Esophagus muscularis mucosa (tissue), 4 donors: ENCODE measurements at regions of chr1 and their contacts with region 1.

Region 1: DNA sequence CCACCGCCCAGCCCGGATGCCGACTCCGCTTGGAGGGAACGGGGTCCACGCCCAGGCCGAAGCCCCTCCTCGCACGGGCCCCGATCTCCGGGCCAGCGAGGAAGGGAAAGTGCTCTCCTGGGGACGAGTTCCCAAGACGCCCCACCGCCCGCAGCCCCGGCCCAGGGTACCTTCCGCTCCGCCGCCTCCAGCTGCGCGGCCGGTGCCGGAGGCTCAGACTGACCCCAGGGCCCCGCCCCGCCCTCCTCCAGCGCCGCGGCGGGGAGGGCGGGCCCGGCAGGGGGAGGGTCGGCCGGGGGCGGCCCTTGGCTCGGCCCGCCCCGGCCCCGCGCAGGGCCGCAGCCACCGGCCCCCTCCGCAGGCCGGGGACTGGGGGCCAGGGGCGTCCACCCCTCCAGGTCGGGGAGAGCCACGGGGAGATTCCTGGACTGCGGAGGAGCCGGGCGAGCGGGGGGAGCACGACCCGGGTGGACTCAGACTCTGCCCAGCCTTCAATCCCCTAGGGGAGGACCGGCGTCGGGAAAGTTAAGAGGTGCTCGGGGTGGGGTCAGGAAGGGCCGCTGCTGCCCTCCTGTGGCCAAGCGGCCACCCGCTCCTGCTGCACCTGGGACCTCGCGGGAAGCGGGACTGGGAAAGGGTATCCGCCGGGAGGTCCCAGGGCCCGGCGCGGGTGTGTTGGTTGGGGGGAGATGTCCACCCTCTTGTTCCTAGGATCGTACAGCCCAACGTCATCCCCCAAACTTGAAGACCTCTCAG is at the start of gene RHOC:
- DNase-seq: peak; percentile 97
- H3K4me3 ChIP-seq: peak within 1 kb of the TSS; percentile 86 to 100 (median 94)
- H3K27ac ChIP-seq: peak within 1 kb of the TSS; percentile 97 to 100 (median 98)
- H3K4me1 ChIP-seq: peaks cover 42 to 49% (median 47%) of the 10 kb centered on the region in 4 donors
- H3K27me3 ChIP-seq: no peaks in the 10 kb centered on the region
- CTCF ChIP-seq: peak; percentile 93 to 99 (median 94)
- EP300 ChIP-seq: no peak
- POLR2A ChIP-seq: peak; percentile 78
- total RNA-seq, gene RHOC: 222 to 374 (median 324) TPM

Region 2: DNA sequence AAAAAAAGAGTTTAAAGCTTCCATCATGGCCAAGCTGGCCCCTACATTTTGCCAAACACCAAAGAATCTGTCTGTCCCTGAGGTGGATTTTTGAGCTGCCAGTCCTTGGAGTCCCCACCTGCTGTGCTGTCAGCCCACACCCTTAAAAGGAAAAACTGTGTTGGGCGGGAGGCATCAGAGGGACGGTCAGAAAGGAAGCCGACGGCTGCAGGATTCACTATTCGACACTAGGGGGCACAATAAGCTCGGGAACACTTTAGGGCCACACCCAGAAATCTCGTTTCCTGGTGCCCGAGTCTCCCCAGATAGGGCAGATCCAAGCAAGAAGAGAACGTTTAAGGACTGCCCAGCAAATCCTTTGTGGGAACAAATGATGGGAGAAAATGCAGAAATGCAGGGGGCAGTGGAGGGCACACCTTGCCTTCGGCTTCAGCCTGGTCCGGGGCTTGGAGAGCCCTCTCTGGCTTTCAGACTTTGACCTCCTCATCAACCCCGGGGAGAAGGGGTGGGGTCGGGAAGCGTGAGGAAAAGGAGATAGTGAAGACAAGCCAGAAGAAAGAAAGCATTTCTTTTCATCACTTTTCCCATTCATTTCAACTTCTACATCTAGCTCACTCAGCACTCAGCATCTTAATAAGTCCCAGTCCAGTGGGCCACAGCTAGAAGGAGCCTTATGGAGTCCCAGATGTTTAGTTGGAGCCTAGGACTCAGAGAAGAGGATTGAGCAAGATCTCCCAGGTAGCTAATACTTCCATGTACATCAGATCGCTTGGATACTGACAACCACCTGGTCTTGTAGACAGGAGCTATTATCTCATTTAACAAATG is 316.1 kb before region 1 on chr1:
- intact Hi-C with region 1: loop called (anchors 5 kb)
- DNase-seq: peak; percentile 98
- H3K4me3 ChIP-seq: peak overlapping the region; percentile 50 to 59 (median 54)
- H3K27ac ChIP-seq: peak overlapping the region; percentile 78 to 88 (median 84)
- H3K4me1 ChIP-seq: peaks cover 41 to 54% (median 51%) of the 10 kb centered on the region in 4 donors
- H3K27me3 ChIP-seq: no peaks in the 10 kb centered on the region
- CTCF ChIP-seq: peak; percentile 85 to 98 (median 96)
- EP300 ChIP-seq: no peak
- POLR2A ChIP-seq: no peak

Region 3: GRCh38 chr1:112466078-112466660 is 240.9 kb before region 1 on chr1:
- intact Hi-C with region 1: loop called (anchors 10 kb)
- DNase-seq: peak; percentile 98
- H3K4me3 ChIP-seq: peak overlapping the region; percentile 47 to 55 (median 49)
- H3K27ac ChIP-seq: peak overlapping the region; percentile 73 to 82 (median 78)
- H3K4me1 ChIP-seq: peaks cover 19 to 43% (median 27%) of the 10 kb centered on the region in 4 donors
- H3K27me3 ChIP-seq: no peaks in the 10 kb centered on the region
- CTCF ChIP-seq: peak; percentile 81 to 91 (median 83)
- EP300 ChIP-seq: no peak
- POLR2A ChIP-seq: no peak

Region 4: DNA sequence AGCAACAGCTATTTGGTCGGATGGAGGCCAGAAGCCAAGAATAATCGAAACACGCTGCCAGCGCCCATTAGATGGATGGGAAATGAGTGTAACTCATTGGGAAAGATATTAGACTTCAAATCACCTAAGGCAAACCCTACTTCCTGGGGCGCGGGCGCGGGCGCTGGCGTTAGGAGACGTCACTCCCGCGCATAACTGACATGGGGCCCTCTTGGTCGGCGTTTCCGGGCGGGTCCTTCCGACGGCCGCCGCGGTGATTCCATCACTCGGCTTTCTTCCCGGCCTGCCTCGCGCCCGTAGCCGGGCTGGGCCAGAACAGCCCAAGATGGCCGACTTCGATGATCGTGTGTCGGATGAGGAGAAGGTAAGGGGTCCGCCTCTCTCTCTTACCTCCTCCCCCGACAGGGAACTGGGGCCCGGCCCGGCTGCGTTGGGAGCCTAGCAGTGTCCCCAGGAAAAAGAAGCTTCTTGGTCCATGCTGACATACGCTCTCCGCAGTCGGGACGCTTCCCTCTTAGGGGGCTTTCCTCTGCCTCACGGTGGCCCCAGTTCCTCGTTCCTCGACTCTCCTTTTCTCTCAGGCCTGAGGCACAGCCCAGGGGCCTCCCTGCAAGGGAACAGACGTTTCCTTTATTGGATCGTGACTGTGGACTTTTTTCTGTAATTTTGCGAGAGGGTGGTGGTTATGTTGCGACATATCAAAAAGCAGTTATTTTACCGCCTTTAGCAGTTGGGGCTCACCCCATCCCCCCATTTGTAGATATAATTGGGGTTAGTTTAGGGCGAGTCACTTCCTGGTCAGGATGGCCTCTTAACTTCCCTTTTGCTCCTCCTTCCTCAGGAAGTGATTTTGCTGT is 87.3 kb before region 1 on chr1 and contains the start of gene CAPZA1:
- intact Hi-C with region 1: loop called (anchors 2 kb)
- DNase-seq: peak; percentile 96
- H3K4me3 ChIP-seq: peak within 1 kb of the TSS; percentile 74 to 95 (median 79)
- H3K27ac ChIP-seq: peak within 1 kb of the TSS; percentile 88 to 97 (median 94)
- H3K4me1 ChIP-seq: peaks cover 41 to 58% (median 54%) of the 10 kb centered on the region in 4 donors
- H3K27me3 ChIP-seq: no peaks in the 10 kb centered on the region
- CTCF ChIP-seq: no peak
- EP300 ChIP-seq: no peak
- POLR2A ChIP-seq: peak; percentile 86
- total RNA-seq, gene CAPZA1: 61.9 to 77.5 (median 69.1) TPM

Region 5: GRCh38 chr1:112674439-112674985 is 32.6 kb before region 1 on chr1 and contains the start of gene MOV10:
- intact Hi-C with region 1: loop called (anchors 5 kb)
- DNase-seq: peak; percentile 95
- H3K4me3 ChIP-seq: peak within 1 kb of the TSS; percentile 63 to 96 (median 71)
- H3K27ac ChIP-seq: peak within 1 kb of the TSS; percentile 85 to 93 (median 91)
- H3K4me1 ChIP-seq: peaks cover 24 to 37% (median 32%) of the 10 kb centered on the region in 4 donors
- H3K27me3 ChIP-seq: no peaks in the 10 kb centered on the region
- CTCF ChIP-seq: no peak
- EP300 ChIP-seq: no peak
- POLR2A ChIP-seq: no peak
- total RNA-seq, gene MOV10: 12.3 to 24.1 (median 18.7) TPM